Natural killer cell (primary cell): ENCODE measurements at regions of chr17 and their contacts with region 1.

Region 1: DNA sequence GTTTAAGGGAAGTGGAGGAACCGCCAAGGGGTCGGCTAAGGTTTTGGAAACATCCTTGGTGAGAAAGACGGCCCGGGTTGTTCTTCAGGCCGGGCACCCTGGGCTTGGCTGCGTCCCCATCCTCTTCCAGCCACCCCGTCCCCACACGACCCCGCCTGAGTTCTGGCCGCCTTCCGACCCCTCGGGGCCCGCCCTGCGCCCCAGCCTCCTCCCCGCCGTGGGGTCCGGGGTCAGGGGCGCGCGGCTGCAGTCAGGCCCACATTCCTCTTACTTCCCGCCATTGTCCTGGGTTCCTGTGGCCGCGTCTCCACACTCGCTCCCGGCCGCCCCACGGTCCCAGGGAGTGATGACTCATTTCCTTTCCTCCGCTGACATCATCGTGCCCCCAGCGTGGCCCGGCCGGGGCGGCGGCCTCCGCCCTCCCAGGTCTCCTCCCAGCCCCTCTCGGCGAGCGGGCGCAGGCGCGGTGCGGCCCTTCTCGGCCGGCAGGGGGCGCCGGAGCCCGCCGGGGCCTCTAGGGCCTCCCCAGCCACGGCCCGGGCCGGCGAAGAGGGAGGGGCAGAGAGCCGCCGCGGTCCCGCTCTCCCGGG is 59.6 kb downstream of the WSB1 start:
- DNase-seq: peak; percentile 88 to 93
- ATAC-seq: peak; percentile 84 to 95 (median 88)
- H3K4me3 ChIP-seq: peak overlapping the region; percentile 60
- H3K4me3 Mint-ChIP-seq: peak overlapping the region; percentile 83
- H3K27ac ChIP-seq: peak overlapping the region; percentile 95
- H3K27ac Mint-ChIP-seq: peak overlapping the region; percentile 89 to 98
- H3K4me1 ChIP-seq: peaks cover 21% of the 10 kb centered on the region
- H3K4me1 Mint-ChIP-seq: peaks cover 35 to 44% of the 10 kb centered on the region in 2 donors
- H3K27me3 ChIP-seq: no peaks in the 10 kb centered on the region
- H3K27me3 Mint-ChIP-seq: no peaks in the 10 kb centered on the region
- CTCF ChIP-seq: peak; percentile 93

Region 2: GRCh38 chr17:27293898-27294688 is 59.5 kb before region 1 on chr17 and contains the start of gene WSB1:
- intact Hi-C with region 1: loop called (anchors 1 kb)
- DNase-seq: peak; percentile 95 to 96
- ATAC-seq: peak; percentile 80 to 94 (median 88)
- H3K4me3 ChIP-seq: peak within 1 kb of the TSS; percentile 72
- H3K4me3 Mint-ChIP-seq: peak within 1 kb of the TSS; percentile 99
- H3K27ac ChIP-seq: peak within 1 kb of the TSS; percentile 98
- H3K27ac Mint-ChIP-seq: peak within 1 kb of the TSS; percentile 99
- H3K4me1 ChIP-seq: peaks cover 33% of the 10 kb centered on the region
- H3K4me1 Mint-ChIP-seq: peaks cover 43 to 61% of the 10 kb centered on the region in 2 donors
- H3K27me3 ChIP-seq: no peaks in the 10 kb centered on the region
- H3K27me3 Mint-ChIP-seq: no peaks in the 10 kb centered on the region
- CTCF ChIP-seq: no peak
- total RNA-seq, gene WSB1: 124 to 205 (median 187) TPM

Region 3: GRCh38 chr17:27332485-27333409 is 20.8 kb before region 1 on chr17:
- intact Hi-C with region 1: loop called (anchors 1 kb)
- DNase-seq: peak; percentile 88 to 92
- ATAC-seq: peak; percentile 82 to 94 (median 86)
- H3K4me3 ChIP-seq: peak overlapping the region; percentile 74
- H3K4me3 Mint-ChIP-seq: peak overlapping the region; percentile 93
- H3K27ac ChIP-seq: peak overlapping the region; percentile 90
- H3K27ac Mint-ChIP-seq: peak overlapping the region; percentile 86 to 97
- H3K4me1 ChIP-seq: peaks cover 35% of the 10 kb centered on the region
- H3K4me1 Mint-ChIP-seq: peaks cover 23 to 29% of the 10 kb centered on the region in 2 donors
- H3K27me3 ChIP-seq: no peaks in the 10 kb centered on the region
- H3K27me3 Mint-ChIP-seq: no peaks in the 10 kb centered on the region
- CTCF ChIP-seq: peak; percentile 74

Region 4: DNA sequence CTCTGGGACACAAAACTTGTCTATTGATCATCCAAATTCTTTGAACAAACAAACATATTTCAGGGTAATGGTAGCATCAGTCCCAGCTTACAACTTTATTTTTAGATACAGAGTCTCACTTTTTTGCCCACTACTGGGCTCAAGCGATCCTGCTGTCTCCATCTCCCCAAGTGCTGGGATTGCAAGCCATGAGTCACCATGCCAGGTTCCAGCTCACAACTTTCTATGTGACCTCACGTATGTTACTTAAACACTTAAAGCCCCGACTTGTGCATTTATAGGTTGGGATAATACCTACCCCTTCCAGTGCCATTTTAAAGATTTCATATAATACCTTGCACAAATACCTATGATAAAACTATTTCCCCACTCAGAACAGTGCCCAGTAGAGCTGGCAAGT is 60.7 kb after region 1 on chr17:
- intact Hi-C with region 1: no loop called
- DNase-seq: no peak
- ATAC-seq: no peak
- H3K4me3 ChIP-seq: no peak overlapping the region
- H3K4me3 Mint-ChIP-seq: no peak overlapping the region
- H3K27ac ChIP-seq: no peak overlapping the region
- H3K27ac Mint-ChIP-seq: no peak overlapping the region
- H3K4me1 ChIP-seq: no peaks in the 10 kb centered on the region
- H3K4me1 Mint-ChIP-seq: no peaks in the 10 kb centered on the region
- H3K27me3 ChIP-seq: no peaks in the 10 kb centered on the region
- H3K27me3 Mint-ChIP-seq: no peaks in the 10 kb centered on the region
- CTCF ChIP-seq: no peak

Region 5: GRCh38 chr17:27473748-27474609 is 120.4 kb after region 1 on chr17:
- intact Hi-C with region 1: no loop called
- DNase-seq: peak; percentile 51 to 86
- ATAC-seq: peak; percentile 55 to 76 (median 74)
- H3K4me3 ChIP-seq: peak overlapping the region; percentile 3
- H3K4me3 Mint-ChIP-seq: peak overlapping the region; percentile 81
- H3K27ac ChIP-seq: peak overlapping the region; percentile 81
- H3K27ac Mint-ChIP-seq: peak overlapping the region; percentile 91 to 96
- H3K4me1 ChIP-seq: peaks cover 78% of the 10 kb centered on the region
- H3K4me1 Mint-ChIP-seq: peaks cover 69 to 72% of the 10 kb centered on the region in 2 donors
- H3K27me3 ChIP-seq: no peaks in the 10 kb centered on the region
- H3K27me3 Mint-ChIP-seq: no peaks in the 10 kb centered on the region
- CTCF ChIP-seq: no peak

Region 6: DNA sequence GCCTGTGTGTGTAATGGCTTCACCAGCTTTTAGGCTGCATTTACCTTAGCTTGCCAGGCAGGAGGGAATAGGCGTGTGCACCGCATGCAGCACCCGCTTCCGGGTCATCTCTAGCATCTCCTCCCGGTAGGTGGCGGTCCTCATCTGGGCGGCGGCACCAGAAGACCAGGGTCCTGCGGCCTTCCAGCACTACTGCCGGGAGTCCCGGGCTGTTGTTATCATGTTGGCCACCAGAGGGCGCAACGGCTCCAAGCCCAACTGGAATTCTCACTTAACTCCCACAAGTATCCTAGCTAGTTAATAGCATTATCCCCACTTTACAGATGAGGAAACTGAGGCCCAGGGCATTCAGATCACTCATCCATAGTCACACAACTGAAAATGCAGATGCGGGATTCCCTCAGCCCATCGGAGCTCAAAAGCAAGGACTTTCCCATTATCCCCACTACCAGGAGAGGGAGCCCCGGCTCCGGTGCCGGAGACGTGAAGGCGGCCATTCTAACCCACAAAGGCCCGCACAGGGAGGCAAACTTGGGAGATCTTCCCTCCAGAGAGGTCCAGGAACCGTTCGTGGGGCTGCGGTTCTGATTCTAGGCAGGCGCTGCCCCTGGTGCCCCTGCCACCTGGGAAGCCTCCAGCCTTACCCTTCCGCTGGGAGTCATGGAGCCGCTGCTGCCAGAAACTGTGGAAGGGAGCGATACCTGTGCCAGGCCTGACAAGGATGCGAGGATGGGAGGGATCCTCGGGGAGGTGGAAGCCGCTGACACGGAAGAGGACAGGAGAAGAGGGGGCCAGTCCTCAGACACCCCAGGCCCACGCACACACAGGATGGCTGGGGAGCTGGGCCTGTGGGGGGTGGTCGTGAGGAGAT is 301.3 kb after region 1 on chr17:
- intact Hi-C with region 1: loop called (anchors 5 kb)
- DNase-seq: peak; percentile 60 to 80
- ATAC-seq: peak; percentile 60 to 73 (median 69)
- H3K4me3 ChIP-seq: no peak overlapping the region
- H3K4me3 Mint-ChIP-seq: no peak overlapping the region
- H3K27ac ChIP-seq: no peak overlapping the region
- H3K27ac Mint-ChIP-seq: no peak overlapping the region
- H3K4me1 ChIP-seq: peaks cover 7% of the 10 kb centered on the region
- H3K4me1 Mint-ChIP-seq: peaks cover 6% of the 10 kb centered on the region in 2 donors
- H3K27me3 ChIP-seq: no peaks in the 10 kb centered on the region
- H3K27me3 Mint-ChIP-seq: no peaks in the 10 kb centered on the region
- CTCF ChIP-seq: peak; percentile 93